Caco-2 (cell line): ENCODE measurements at regions of chr20 and their contacts with region 1.

Region 1: GRCh38 chr20:2849529-2849928 is 9.0 kb downstream of the VPS16 start:
- DNase-seq: no peak
- H3K4me3 ChIP-seq: no peak overlapping the region
- H3K4me3 Mint-ChIP-seq: no peak overlapping the region
- H3K27ac Mint-ChIP-seq: no peak overlapping the region
- H3K4me1 ChIP-seq: no peaks in the 10 kb centered on the region
- H3K4me1 Mint-ChIP-seq: no peaks in the 10 kb centered on the region
- H3K27me3 ChIP-seq: no peaks in the 10 kb centered on the region
- H3K27me3 Mint-ChIP-seq: no peaks in the 10 kb centered on the region
- CTCF ChIP-seq: no peak

Region 2: GRCh38 chr20:2713285-2713684 is 136.2 kb before region 1 on chr20:
- CTCF ChIA-PET with region 1: no interaction called
- POLR2A ChIA-PET with region 1: no interaction called
- intact Hi-C with region 1: loop called (anchors 2 kb)
- DNase-seq: no peak
- H3K4me3 ChIP-seq: no peak overlapping the region
- H3K4me3 Mint-ChIP-seq: no peak overlapping the region
- H3K27ac Mint-ChIP-seq: no peak overlapping the region
- H3K4me1 ChIP-seq: no peaks in the 10 kb centered on the region
- H3K4me1 Mint-ChIP-seq: no peaks in the 10 kb centered on the region
- H3K27me3 ChIP-seq: no peaks in the 10 kb centered on the region
- H3K27me3 Mint-ChIP-seq: peaks cover 3% of the 10 kb centered on the region
- CTCF ChIP-seq: peak; percentile 26 to 49

Region 3: DNA sequence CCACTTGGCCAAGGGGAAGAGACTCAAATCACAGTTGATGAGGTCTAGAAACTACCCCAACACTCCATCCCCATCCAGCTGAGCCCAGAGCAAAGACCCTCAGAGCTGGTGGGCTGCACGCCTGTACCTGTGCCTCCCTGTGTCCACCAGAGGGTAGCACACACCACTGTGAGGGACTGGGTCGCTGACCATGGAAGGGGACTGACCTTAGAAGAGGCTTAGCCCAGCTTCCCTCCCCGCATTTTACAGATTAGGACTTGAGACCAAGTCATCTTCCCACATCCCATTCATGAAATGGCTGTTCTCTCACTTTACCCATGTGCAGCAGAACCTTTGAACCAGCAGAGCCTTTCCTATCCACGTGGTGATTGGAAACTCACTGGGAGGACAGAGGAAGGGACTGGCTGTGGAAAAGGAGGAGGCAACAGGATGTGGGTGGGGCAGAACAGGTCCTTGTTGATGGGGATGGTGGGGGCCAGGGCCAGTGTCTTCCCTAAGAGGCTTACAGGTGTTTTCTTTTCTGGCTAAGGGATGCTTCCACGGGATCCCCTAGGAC is 93.4 kb before region 1 on chr20:
- CTCF ChIA-PET with region 1: interaction called, 9 read pairs
- POLR2A ChIA-PET with region 1: no interaction called
- intact Hi-C with region 1: loop called (anchors 1 kb)
- DNase-seq: peak; percentile 48 to 61
- H3K4me3 ChIP-seq: no peak overlapping the region
- H3K4me3 Mint-ChIP-seq: no peak overlapping the region
- H3K27ac Mint-ChIP-seq: no peak overlapping the region
- H3K4me1 ChIP-seq: peaks cover 13% of the 10 kb centered on the region
- H3K4me1 Mint-ChIP-seq: peaks cover 8% of the 10 kb centered on the region
- H3K27me3 ChIP-seq: no peaks in the 10 kb centered on the region; the same call in 1 of the 2 replicates
- H3K27me3 Mint-ChIP-seq: peaks cover 7% of the 10 kb centered on the region
- CTCF ChIP-seq: peak; percentile 70 to 79

Region 4: GRCh38 chr20:2865630-2866029 is 16.1 kb after region 1 on chr20:
- CTCF ChIA-PET with region 1: interaction called, 3 read pairs
- POLR2A ChIA-PET with region 1: interaction called, 10 read pairs
- intact Hi-C with region 1: no loop called
- DNase-seq: no peak
- H3K4me3 ChIP-seq: no peak overlapping the region
- H3K4me3 Mint-ChIP-seq: no peak overlapping the region
- H3K27ac Mint-ChIP-seq: no peak overlapping the region
- H3K4me1 ChIP-seq: peaks cover 3% of the 10 kb centered on the region; the same call in 1 of the 2 replicates
- H3K4me1 Mint-ChIP-seq: peaks cover 6% of the 10 kb centered on the region
- H3K27me3 ChIP-seq: no peaks in the 10 kb centered on the region
- H3K27me3 Mint-ChIP-seq: no peaks in the 10 kb centered on the region
- CTCF ChIP-seq: no peak

Region 5: DNA sequence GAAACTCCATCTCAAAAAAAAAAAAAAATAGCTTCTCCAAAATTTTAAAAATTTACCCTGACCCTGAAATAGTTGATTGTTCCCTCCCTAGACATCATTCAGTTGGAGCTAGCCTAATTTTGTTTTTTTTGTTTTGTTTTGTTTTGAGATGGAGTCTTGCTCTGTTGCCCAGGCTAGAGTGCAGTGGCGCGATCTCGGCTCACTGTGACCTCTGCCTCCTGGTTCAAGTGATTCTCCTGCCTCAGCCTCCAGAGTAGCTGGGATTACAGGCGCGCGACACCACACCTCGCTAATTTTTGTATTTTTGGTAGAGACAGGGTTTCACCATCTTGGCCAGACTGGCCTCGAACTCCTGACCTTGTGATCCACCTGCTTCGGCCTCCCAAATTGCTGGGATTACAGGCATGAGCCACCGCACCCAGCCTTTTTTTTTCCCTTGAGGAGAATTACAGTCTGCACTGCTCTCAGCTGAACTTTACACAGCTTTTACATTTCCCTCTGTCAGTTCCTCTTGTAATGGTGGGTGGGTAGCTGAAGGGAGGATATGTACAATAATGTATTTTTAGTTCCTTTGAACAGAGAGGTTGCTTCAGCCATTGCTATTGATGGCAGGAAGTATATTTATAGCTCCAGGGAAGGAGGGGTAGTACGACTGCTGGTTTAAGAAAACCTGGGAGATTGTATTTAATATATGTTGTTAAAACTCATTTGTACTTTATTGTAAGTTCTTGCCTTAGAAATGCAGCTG is 51.5 kb after region 1 on chr20:
- CTCF ChIA-PET with region 1: no interaction called
- POLR2A ChIA-PET with region 1: no interaction called
- intact Hi-C with region 1: no loop called
- DNase-seq: no peak
- H3K4me3 ChIP-seq: no peak overlapping the region
- H3K4me3 Mint-ChIP-seq: no peak overlapping the region
- H3K27ac Mint-ChIP-seq: no peak overlapping the region
- H3K4me1 ChIP-seq: no peaks in the 10 kb centered on the region
- H3K4me1 Mint-ChIP-seq: no peaks in the 10 kb centered on the region
- H3K27me3 ChIP-seq: no peaks in the 10 kb centered on the region
- H3K27me3 Mint-ChIP-seq: no peaks in the 10 kb centered on the region
- CTCF ChIP-seq: no peak